H1 (cell line): ENCODE measurements at regions of chr16 and their contacts with region 1.

Region 1: DNA sequence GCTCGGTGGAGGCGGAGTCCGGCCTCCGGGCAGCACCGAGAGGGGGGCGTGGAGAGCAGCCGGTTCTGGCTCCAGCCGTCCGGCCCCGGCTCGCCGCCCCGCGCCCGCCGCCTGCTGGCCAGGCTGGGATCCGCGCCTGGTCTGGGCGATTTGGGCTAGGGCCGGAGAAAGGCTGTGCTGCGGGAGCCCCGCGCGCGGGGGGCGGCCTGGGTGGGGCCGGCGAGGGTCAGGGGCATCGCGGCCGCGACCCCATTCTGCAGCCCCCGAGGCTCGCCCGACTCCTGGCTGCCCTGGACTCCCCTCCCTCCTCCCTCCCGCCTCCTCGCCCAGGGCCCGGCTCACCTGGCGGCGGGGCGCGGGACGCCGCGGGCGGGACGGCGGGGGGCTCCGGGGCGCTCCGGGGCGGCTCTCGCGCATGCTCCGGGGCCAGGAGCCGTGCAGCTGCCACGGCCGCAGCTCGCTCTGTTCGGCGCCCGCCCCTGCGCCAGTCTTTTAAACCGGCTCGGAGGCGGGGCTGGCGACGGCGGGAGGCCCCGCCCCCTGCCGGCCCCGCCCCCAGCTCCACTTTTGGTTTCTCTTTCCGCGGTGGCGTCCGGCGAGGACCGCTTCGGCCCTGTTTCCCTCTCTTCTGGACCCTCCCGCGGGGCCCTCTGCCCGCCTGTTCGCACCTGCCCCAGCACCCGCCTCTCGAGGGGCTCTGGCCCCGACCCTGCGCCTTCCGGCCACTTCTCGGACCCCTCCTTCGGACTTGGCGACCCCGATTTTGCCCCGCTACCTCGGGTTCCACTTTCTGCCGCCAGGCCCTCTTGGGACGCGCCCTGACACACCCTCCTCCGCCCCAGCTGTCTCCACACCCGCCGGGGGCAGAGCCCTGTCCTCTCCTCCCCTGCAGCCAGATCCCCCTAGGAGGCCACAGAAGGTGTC is at the start of gene SOCS1:
- DNase-seq: peak; percentile 59 to 95
- H3K4me3 ChIP-seq: peak within 1 kb of the TSS; percentile 61 to 97 (median 74)
- H3K27ac ChIP-seq: no peak within 1 kb of the TSS
- H3K4me1 ChIP-seq: peaks cover 0 to 23% (median 8%) of the 10 kb centered on the region in 4 experiments; a peak in 5 of 7 replicates
- H3K27me3 ChIP-seq: no peaks in the 10 kb centered on the region; a peak in 1 of 7 replicates
- CTCF ChIP-seq: peak; percentile 74 to 81 (median 75)
- EP300 ChIP-seq: 0 out of 3 replicates have a peak, but pooled peaks of 1 of the 2 experiments have one; percentile 36
- POLR2A ChIP-seq: peak; percentile 94 to 97
- RAD21 ChIP-seq: peak; percentile 62 to 73
- total RNA-seq, gene SOCS1: 48.9 and 49.8 TPM in 2 replicates

Region 2: DNA sequence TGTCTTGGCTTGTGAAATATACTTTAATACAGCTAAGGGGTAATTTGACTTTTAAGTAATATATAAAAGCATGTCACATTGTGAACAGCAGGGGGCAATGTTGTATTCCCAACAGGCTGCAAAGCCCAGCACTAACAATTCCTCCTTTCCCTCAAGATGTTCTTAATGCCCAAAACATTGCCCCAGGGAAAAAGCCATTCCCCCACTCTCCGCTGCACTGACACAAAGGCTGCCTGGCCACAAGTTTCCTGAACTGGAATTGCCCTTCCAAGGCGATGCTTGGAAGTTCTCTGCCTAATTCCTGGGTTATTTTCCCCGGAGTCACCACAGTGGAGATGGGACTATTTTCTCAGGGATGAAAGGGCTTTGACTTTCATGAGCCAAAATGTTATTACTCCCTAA is 284.4 kb before region 1 on chr16:
- CTCF ChIA-PET with region 1: interaction called, 17 read pairs
- POLR2A ChIA-PET with region 1: interaction called, 4 read pairs
- DNase-seq: no peak
- H3K4me3 ChIP-seq: no peak overlapping the region
- H3K27ac ChIP-seq: no peak overlapping the region
- H3K4me1 ChIP-seq: peaks cover 0 to 2% (median 0%) of the 10 kb centered on the region in 4 experiments; a peak in 2 of 7 replicates
- H3K27me3 ChIP-seq: no peaks in the 10 kb centered on the region
- CTCF ChIP-seq: peak in 2 of 3 experiments; percentile 63 to 70; a peak in 3 of 4 replicates
- EP300 ChIP-seq: no peak
- POLR2A ChIP-seq: no peak
- RAD21 ChIP-seq: peak; percentile 81 to 84

Region 3: DNA sequence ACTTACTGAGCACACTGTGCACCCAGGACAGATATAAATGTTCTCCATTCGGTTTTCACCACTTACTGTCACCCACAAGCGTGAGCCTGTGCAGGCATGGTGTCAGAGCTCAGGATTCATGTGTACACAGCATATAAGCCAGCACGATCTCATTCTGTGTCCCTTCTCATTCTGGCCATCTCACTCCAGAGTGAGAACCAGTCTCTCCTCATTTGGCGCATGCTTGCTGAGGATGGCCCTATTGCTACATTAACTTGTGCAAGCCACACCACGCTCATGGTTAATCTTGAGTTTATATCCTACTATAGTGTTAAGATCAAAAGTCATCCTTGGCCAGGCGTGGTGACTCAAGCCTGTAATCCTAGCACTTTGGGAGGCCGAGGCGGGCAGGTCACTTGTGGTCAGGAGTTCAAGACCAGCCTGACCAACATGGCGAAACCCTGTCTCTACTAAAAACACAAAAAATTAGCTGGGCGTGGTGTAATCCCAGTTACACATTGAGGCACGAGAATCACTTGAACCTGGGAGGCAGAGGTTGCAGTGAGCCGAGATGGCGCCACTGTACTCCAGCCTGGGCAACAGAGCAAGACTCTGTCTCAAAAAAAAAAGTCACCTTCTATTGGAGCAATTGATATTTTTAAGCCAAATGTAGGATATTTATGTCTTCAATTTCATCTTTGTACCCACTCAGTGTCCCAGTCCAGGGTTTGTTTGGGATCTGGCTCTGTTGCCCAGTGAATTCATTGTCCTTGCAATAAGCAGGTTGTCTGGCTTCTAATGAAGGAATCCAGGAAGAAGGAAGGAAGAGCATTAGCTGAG is 20.9 kb before region 1 on chr16:
- CTCF ChIA-PET with region 1: interaction called, 7 read pairs
- POLR2A ChIA-PET with region 1: interaction called, 21 read pairs
- DNase-seq: no peak
- H3K4me3 ChIP-seq: no peak overlapping the region
- H3K27ac ChIP-seq: no peak overlapping the region
- H3K4me1 ChIP-seq: peaks cover 0 to 4% (median 1%) of the 10 kb centered on the region in 4 experiments; a peak in 3 of 7 replicates
- H3K27me3 ChIP-seq: no peaks in the 10 kb centered on the region
- CTCF ChIP-seq: no peak
- EP300 ChIP-seq: no peak
- POLR2A ChIP-seq: no peak
- RAD21 ChIP-seq: no peak

Region 4: DNA sequence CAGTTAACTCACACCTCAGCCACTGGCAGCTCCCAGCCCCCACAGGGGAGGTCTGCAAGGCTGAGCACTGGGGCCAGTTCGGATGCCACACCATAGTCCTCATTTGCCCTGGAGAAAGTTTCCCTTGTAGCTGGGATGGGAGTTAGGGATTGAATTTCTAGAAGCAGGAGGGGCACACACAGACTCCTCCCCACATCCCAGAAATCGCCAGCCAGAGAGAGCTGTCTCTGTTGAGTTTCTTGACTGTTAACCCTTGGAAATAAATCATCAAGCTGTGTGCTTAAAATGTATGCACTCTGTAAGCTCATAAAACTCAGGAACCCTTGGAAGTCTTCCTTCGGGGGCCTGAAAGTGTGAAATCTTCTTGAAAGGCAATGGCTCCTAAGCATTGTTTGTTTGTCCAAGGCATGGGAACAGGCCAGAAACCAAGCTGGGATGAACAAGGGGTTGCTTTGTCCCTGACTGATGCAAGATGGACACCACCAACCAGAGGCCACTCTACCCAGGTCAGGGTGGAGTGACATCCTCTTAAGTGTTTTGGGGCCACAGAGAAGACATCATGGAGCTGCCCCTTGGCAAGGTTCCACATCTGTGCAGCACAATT is 17.8 kb after region 1 on chr16:
- CTCF ChIA-PET with region 1: interaction called, 79 read pairs
- POLR2A ChIA-PET with region 1: interaction called, 25 read pairs
- DNase-seq: no peak
- H3K4me3 ChIP-seq: no peak overlapping the region
- H3K27ac ChIP-seq: no peak overlapping the region
- H3K4me1 ChIP-seq: peaks cover 0 to 5% (median 0%) of the 10 kb centered on the region in 4 experiments; a peak in 2 of 7 replicates
- H3K27me3 ChIP-seq: no peaks in the 10 kb centered on the region
- CTCF ChIP-seq: no peak
- EP300 ChIP-seq: no peak
- POLR2A ChIP-seq: no peak
- RAD21 ChIP-seq: no peak

Region 5: DNA sequence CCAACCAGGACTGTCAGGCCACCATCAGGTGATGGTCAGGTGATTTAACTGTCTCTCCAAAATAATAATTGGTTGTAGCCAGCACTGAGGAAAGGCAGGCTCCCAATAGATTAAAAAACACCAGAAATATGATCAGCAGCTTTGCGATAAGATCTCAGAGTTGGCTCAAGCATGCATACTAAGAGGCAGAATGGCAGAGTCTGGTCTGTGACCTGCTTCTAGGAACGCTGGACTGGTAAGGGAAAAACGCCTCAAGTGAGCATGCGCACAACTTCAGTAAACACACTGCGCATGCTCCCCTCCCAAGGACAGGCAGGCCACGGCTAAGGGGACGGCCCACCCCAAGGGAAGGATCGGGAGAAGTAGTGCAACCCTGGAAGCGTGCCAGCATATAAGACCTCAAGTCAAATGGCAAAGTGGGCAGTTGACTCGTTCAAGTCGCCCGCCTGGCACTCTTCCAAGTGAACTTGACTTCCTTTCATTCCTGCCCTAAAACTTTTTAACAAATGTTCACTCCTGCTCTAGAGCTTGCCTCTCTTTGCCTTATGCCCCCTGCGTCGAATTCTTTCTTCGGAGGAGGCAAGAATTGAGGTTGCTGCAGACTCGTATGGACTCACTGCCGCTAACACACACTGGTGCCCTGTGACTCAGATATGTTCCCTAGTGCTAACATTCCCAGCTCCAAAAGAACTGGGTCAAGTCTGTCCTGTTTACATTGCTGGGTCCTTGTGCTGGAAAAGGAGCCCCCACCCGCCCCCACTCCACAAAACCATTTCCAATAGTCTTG is 47.5 kb after region 1 on chr16:
- CTCF ChIA-PET with region 1: interaction called, 13 read pairs
- POLR2A ChIA-PET with region 1: interaction called, 12 read pairs
- DNase-seq: no peak
- H3K4me3 ChIP-seq: no peak overlapping the region
- H3K27ac ChIP-seq: no peak overlapping the region
- H3K4me1 ChIP-seq: peaks cover 0 to 6% (median under 1%) of the 10 kb centered on the region in 4 experiments; a peak in 3 of 7 replicates
- H3K27me3 ChIP-seq: no peaks in the 10 kb centered on the region
- CTCF ChIP-seq: no peak
- EP300 ChIP-seq: no peak
- POLR2A ChIP-seq: no peak
- RAD21 ChIP-seq: no peak

Region 6: GRCh38 chr16:11333711-11334110 is 77.7 kb after region 1 on chr16:
- CTCF ChIA-PET with region 1: interaction called, 12 read pairs
- POLR2A ChIA-PET with region 1: interaction called, 32 read pairs
- DNase-seq: no peak
- H3K4me3 ChIP-seq: no peak overlapping the region
- H3K27ac ChIP-seq: no peak overlapping the region
- H3K4me1 ChIP-seq: peaks cover 0 to 5% (median under 1%) of the 10 kb centered on the region in 4 experiments; a peak in 5 of 7 replicates
- H3K27me3 ChIP-seq: no peaks in the 10 kb centered on the region
- CTCF ChIP-seq: no peak
- EP300 ChIP-seq: no peak
- POLR2A ChIP-seq: no peak
- RAD21 ChIP-seq: no peak

Region 7: GRCh38 chr16:11370084-11370931 is 114.3 kb after region 1 on chr16:
- CTCF ChIA-PET with region 1: interaction called, 18 read pairs
- POLR2A ChIA-PET with region 1: interaction called, 12 read pairs
- DNase-seq: no peak
- H3K4me3 ChIP-seq: no peak overlapping the region
- H3K27ac ChIP-seq: no peak overlapping the region
- H3K4me1 ChIP-seq: no peaks in the 10 kb centered on the region; a peak in 3 of 7 replicates
- H3K27me3 ChIP-seq: no peaks in the 10 kb centered on the region
- CTCF ChIP-seq: no peak
- EP300 ChIP-seq: no peak
- POLR2A ChIP-seq: no peak
- RAD21 ChIP-seq: no peak